ENCODE measurements at regions of chr1 and their contacts with region 1.

Region 1: GRCh38 chr1:41573785-41574713 is 89.6 kb upstream of the EDN2 start:
- DNase-seq: peak; percentile 80 to 86
- H3K4me3 ChIP-seq: no peak overlapping the region
- H3K27ac ChIP-seq: no peak overlapping the region
- H3K4me1 ChIP-seq: peaks cover 0 to 6% (median 2%) of the 10 kb centered on the region in 4 donors
- H3K27me3 ChIP-seq: no peaks in the 10 kb centered on the region
- CTCF ChIP-seq: peak; percentile 87 to 89

Region 2: GRCh38 chr1:41484372-41485241 is 89.4 kb before region 1 on chr1 and contains the start of gene EDN2:
- intact Hi-C with region 1: no loop called
- DNase-seq: no peak
- H3K4me3 ChIP-seq: no peak within 1 kb of the TSS
- H3K27ac ChIP-seq: no peak within 1 kb of the TSS
- H3K4me1 ChIP-seq: peaks cover 0 to 41% (median 7%) of the 10 kb centered on the region in 4 donors
- H3K27me3 ChIP-seq: no peaks in the 10 kb centered on the region
- CTCF ChIP-seq: peak in 1 of 2 experiments; percentile 7

Region 3: GRCh38 chr1:42173155-42173933 is 599.3 kb after region 1 on chr1:
- intact Hi-C with region 1: loop called (anchors 5 kb)
- DNase-seq: no peak
- H3K4me3 ChIP-seq: no peak overlapping the region
- H3K27ac ChIP-seq: no peak overlapping the region
- H3K4me1 ChIP-seq: peaks cover 0 to 18% (median 5%) of the 10 kb centered on the region in 4 donors
- H3K27me3 ChIP-seq: peaks cover 0 to 5% of the 10 kb centered on the region in 2 donors
- CTCF ChIP-seq: peak; percentile 83 to 92